Transverse colon (tissue), 4 donors: ENCODE measurements at regions of chr7 and their contacts with region 1.

Region 1: DNA sequence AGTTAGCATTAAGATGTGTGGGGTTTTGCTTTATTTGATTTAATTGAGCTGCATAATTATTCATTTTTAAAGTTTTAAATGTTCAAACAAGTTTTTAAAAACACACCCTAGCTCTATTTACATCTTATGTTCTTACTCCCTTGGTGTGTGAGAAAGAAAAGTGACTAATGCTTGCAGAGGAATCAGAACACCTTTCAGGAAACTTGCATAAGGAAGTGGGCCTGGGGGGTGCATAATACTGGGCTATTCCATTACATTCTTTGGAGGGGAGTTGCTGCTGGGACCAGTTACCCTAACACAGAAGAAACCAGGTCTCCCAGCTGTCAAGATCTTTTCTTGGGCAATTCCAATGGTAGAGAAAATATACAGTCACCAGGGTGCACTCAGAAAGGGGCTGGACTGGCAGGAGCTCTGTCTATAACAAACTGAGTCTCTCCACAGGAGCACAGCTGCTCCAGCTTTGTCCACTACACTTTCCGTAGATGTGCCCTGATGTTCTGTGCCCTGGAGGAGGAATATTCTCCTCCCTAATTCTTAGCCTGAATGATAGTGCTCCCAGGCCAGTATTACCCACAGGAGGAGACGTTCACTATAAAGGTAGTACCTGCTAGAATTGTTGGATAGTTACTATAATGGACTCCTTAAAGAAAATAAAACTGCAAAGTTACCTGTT is 304.2 kb downstream of the CDC14C start:
- DNase-seq: no peak
- H3K4me3 ChIP-seq: no peak overlapping the region
- H3K27ac ChIP-seq: no peak overlapping the region
- H3K4me1 ChIP-seq: no peaks in the 10 kb centered on the region
- H3K27me3 ChIP-seq: no peaks in the 10 kb centered on the region
- CTCF ChIP-seq: no peak
- EP300 ChIP-seq: no peak
- POLR2A ChIP-seq: no peak

Region 2: DNA sequence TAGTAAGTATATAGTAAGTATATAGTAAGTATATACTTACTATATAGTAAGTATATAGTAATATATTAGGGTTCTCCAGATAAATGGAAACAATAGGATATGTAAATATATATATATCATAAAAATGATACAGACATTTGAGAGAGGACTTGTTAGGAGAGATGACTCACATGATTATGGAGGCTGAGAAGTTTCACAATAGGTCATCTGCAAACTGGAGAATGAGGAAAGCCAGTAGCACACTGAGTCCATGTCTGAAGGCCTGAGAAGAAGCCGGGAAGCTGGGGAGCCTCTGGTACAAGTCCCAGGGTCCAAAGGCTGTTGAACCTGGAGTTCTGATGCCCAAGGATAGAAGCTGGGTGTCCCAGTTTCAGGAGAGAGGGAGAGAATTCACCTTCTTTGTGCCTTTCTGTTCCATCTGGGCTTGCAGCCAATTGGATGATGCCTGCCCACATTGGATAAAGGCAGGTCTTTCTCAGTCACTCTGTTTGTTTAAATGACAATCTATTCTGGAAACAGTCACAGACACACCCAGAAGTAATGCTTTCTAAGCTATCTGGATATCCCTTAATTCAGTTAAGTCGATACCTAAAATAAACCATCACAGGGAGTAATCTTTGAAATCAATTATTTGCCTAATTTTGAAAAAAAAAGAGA is 509.7 kb before region 1 on chr7:
- in situ Hi-C with region 1: no loop called
- intact Hi-C with region 1: no loop called
- DNase-seq: no peak
- H3K4me3 ChIP-seq: no peak overlapping the region
- H3K27ac ChIP-seq: no peak overlapping the region
- H3K4me1 ChIP-seq: no peaks in the 10 kb centered on the region
- H3K27me3 ChIP-seq: no peaks in the 10 kb centered on the region
- CTCF ChIP-seq: no peak
- EP300 ChIP-seq: no peak
- POLR2A ChIP-seq: no peak

Region 3: GRCh38 chr7:49099587-49100326 is 128.8 kb before region 1 on chr7:
- in situ Hi-C with region 1: no loop called
- intact Hi-C with region 1: no loop called
- DNase-seq: no peak
- H3K4me3 ChIP-seq: no peak overlapping the region
- H3K27ac ChIP-seq: no peak overlapping the region
- H3K4me1 ChIP-seq: no peaks in the 10 kb centered on the region
- H3K27me3 ChIP-seq: no peaks in the 10 kb centered on the region
- CTCF ChIP-seq: peak in 1 of 5 experiments; percentile 21
- EP300 ChIP-seq: no peak
- POLR2A ChIP-seq: no peak

Region 4: DNA sequence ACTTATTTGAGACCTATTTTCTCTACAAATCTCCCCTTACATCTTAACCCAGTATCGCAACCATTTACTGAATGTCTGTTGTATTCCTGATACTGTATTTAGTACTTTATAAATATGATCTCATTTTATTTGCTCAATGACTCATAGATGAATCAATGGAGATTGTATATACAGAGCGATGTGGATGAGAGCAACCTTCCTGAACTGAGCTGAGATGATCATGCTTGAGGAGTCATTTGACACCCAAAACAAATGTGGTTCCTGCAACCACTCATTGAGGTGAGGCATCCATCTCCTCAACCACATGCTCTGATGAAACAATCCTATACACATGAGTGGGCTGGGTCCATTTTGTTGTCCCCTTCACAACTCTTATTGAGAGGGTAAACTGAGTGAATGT is 54.2 kb before region 1 on chr7:
- in situ Hi-C with region 1: no loop called
- intact Hi-C with region 1: loop called (anchors 2 kb)
- DNase-seq: no peak
- H3K4me3 ChIP-seq: no peak overlapping the region
- H3K27ac ChIP-seq: no peak overlapping the region
- H3K4me1 ChIP-seq: no peaks in the 10 kb centered on the region
- H3K27me3 ChIP-seq: no peaks in the 10 kb centered on the region
- CTCF ChIP-seq: no peak
- EP300 ChIP-seq: no peak
- POLR2A ChIP-seq: no peak